PC-3 (cell line): ENCODE measurements at regions of chr16 and their contacts with region 1.

Region 1: GRCh38 chr16:1610276-1611017 is 1.4 kb downstream of the IFT140 start:
- DNase-seq: peak; percentile 83
- ATAC-seq: peak; percentile 57
- H3K4me3 ChIP-seq: peak overlapping the region; percentile 87
- H3K27ac ChIP-seq: peak overlapping the region; percentile 77
- H3K4me1 ChIP-seq: peaks cover 18% of the 10 kb centered on the region
- H3K27me3 ChIP-seq: no peaks in the 10 kb centered on the region
- CTCF ChIP-seq: no peak

Region 2: GRCh38 chr16:1492923-1493745 is 117.3 kb before region 1 on chr16 and contains the start of gene TELO2:
- CTCF ChIA-PET with region 1: no interaction called
- POLR2A ChIA-PET with region 1: no interaction called
- intact Hi-C with region 1: loop called (anchors 2 kb)
- DNase-seq: peak; percentile 70
- ATAC-seq: peak; percentile 73
- H3K4me3 ChIP-seq: peak within 1 kb of the TSS; percentile 83
- H3K27ac ChIP-seq: peak within 1 kb of the TSS; percentile 59
- H3K4me1 ChIP-seq: peaks cover 13% of the 10 kb centered on the region
- H3K27me3 ChIP-seq: no peaks in the 10 kb centered on the region
- CTCF ChIP-seq: no peak
- total RNA-seq, gene TELO2: 37.8 and 61.3 TPM in 2 replicates

Region 3: GRCh38 chr16:1580961-1581518 is 29.4 kb before region 1 on chr16:
- CTCF ChIA-PET with region 1: no interaction called
- POLR2A ChIA-PET with region 1: no interaction called
- intact Hi-C with region 1: no loop called
- DNase-seq: peak; percentile 16
- ATAC-seq: peak; percentile 95
- H3K4me3 ChIP-seq: no peak overlapping the region
- H3K27ac ChIP-seq: no peak overlapping the region
- H3K4me1 ChIP-seq: no peaks in the 10 kb centered on the region; the same call in 1 of the 2 replicates
- H3K27me3 ChIP-seq: no peaks in the 10 kb centered on the region
- CTCF ChIP-seq: no peak

Region 4: DNA sequence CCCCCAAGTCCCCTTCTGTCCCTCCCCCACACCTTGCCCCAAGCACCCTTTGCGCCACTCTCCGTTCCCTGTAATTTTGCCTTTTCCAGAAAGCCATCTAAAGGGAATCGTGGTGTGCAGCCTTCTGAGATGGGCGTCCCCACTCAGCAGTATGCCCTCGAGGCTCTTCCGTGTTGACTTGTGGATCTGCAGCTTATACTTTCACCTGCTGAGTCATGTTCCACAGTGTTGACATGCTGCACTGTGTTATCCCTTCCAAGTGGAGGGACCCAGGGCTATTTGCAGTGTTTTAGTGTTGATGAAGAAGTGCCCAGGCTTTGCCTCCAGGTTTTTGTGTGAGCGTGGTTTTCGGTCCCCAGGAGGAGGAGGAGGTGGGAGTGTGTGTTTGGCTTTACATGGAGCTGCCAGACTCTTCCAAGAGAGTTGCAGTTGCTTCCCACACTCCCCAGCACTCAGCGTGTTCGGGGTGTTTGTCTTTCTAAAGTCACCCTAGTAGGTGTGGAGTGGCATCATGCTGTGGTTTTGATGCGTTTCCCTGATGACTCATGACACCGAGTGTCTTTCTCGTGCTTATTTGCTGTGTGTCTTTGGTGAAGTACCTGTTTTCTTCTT is 35.6 kb after region 1 on chr16:
- CTCF ChIA-PET with region 1: no interaction called
- POLR2A ChIA-PET with region 1: no interaction called
- intact Hi-C with region 1: loop called (anchors 5 kb)
- DNase-seq: peak; percentile 81
- ATAC-seq: peak; percentile 97
- H3K4me3 ChIP-seq: peak overlapping the region; percentile 27; the same call in 1 of the 2 replicates
- H3K27ac ChIP-seq: peak overlapping the region; percentile 89
- H3K4me1 ChIP-seq: peaks cover 21% of the 10 kb centered on the region
- H3K27me3 ChIP-seq: no peaks in the 10 kb centered on the region
- CTCF ChIP-seq: no peak

Region 5: GRCh38 chr16:1691956-1692355 is 81.5 kb after region 1 on chr16:
- CTCF ChIA-PET with region 1: interaction called, 3 read pairs
- POLR2A ChIA-PET with region 1: interaction called, 12 read pairs
- intact Hi-C with region 1: no loop called
- DNase-seq: peak; percentile 93
- ATAC-seq: peak; percentile 65
- H3K4me3 ChIP-seq: peak overlapping the region; percentile 48; the same call in 1 of the 2 replicates
- H3K27ac ChIP-seq: peak overlapping the region; percentile 95
- H3K4me1 ChIP-seq: peaks cover 63% of the 10 kb centered on the region
- H3K27me3 ChIP-seq: no peaks in the 10 kb centered on the region
- CTCF ChIP-seq: no peak; the same call in 1 of the 2 replicates

Region 6: GRCh38 chr16:1705688-1706385 is 95.4 kb after region 1 on chr16 and contains the start of gene MAPK8IP3:
- CTCF ChIA-PET with region 1: no interaction called
- POLR2A ChIA-PET with region 1: no interaction called
- intact Hi-C with region 1: loop called (anchors 5 kb)
- DNase-seq: peak; percentile 90
- ATAC-seq: peak; percentile 62
- H3K4me3 ChIP-seq: peak within 1 kb of the TSS; percentile 96
- H3K27ac ChIP-seq: peak within 1 kb of the TSS; percentile 87
- H3K4me1 ChIP-seq: peaks cover 27% of the 10 kb centered on the region
- H3K27me3 ChIP-seq: no peaks in the 10 kb centered on the region
- CTCF ChIP-seq: peak; percentile 66
- total RNA-seq, gene MAPK8IP3: 41.1 and 59.7 TPM in 2 replicates

Region 7: DNA sequence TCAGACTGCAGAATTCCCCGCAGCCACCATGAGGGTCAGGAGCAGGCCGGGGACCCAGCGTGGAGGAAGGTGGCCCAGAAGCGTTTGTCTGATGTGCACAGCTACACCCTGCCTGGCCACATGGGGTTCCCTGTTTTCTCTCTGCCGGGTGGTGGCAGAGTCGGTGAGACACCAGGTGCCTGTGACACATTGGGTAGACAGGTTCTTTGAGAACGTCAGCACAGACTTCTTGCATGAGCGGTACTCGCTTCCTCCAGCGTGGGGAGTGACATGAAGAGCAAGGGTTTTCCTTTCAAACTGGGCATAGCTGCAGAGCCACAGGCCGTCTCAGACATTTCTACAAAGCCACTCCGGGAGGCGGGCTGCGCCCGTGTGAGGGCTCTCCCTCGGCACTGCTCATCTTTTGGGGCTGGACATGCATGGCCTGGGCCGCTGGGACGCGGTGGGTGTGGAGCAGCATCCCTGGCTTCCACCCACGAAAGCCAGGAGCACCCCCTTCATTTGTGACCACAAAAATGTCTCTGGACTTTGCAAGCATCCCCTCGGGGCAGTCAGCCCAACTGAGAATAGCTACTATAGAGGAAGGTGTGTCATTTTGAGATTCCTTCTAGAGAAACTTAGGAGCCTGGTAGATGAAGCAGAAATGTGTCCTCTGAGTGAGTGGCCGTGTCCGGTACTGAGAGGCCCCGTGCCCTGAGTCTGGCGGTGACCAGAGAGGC is 134.9 kb after region 1 on chr16:
- CTCF ChIA-PET with region 1: no interaction called
- POLR2A ChIA-PET with region 1: no interaction called
- intact Hi-C with region 1: no loop called
- DNase-seq: peak; percentile 36
- ATAC-seq: peak; percentile 53
- H3K4me3 ChIP-seq: no peak overlapping the region
- H3K27ac ChIP-seq: 0 out of 2 replicates have a peak overlapping the region, but pooled peaks have one; percentile 5
- H3K4me1 ChIP-seq: no peaks in the 10 kb centered on the region
- H3K27me3 ChIP-seq: no peaks in the 10 kb centered on the region
- CTCF ChIP-seq: no peak

Region 8: GRCh38 chr16:1826691-1827575 is 216.5 kb after region 1 on chr16 and contains the starts of genes FAHD1 and HAGH:
- CTCF ChIA-PET with region 1: no interaction called
- POLR2A ChIA-PET with region 1: no interaction called
- intact Hi-C with region 1: no loop called
- DNase-seq: peak; percentile 84
- ATAC-seq: peak; percentile 85
- H3K4me3 ChIP-seq: peak within 1 kb of the TSS; percentile 99
- H3K27ac ChIP-seq: peak within 1 kb of the TSS; percentile 46
- H3K4me1 ChIP-seq: peaks cover 12% of the 10 kb centered on the region
- H3K27me3 ChIP-seq: no peaks in the 10 kb centered on the region
- CTCF ChIP-seq: no peak
- total RNA-seq, gene FAHD1: 37.5 and 47.5 TPM in 2 replicates
- total RNA-seq, gene HAGH: 96.9 and 99.5 TPM in 2 replicates